ENCODE measurements at regions of chr20 and their contacts with region 1.

Region 1: GRCh38 chr20:17536944-17537444 is 5.8 kb upstream of the BFSP1 start:
- DNase-seq: peak; percentile 76
- ATAC-seq: peak; percentile 98
- H3K4me3 ChIP-seq: no peak overlapping the region
- H3K27ac ChIP-seq: no peak overlapping the region
- H3K4me1 ChIP-seq: peaks cover 2% of the 10 kb centered on the region
- H3K27me3 ChIP-seq: peaks cover 4% of the 10 kb centered on the region
- CTCF ChIP-seq: peak; percentile 98
- POLR2A ChIP-seq: peak; percentile 46; the same call in 1 of the 2 replicates
- RAD21 ChIP-seq: peak; percentile 94

Region 2: DNA sequence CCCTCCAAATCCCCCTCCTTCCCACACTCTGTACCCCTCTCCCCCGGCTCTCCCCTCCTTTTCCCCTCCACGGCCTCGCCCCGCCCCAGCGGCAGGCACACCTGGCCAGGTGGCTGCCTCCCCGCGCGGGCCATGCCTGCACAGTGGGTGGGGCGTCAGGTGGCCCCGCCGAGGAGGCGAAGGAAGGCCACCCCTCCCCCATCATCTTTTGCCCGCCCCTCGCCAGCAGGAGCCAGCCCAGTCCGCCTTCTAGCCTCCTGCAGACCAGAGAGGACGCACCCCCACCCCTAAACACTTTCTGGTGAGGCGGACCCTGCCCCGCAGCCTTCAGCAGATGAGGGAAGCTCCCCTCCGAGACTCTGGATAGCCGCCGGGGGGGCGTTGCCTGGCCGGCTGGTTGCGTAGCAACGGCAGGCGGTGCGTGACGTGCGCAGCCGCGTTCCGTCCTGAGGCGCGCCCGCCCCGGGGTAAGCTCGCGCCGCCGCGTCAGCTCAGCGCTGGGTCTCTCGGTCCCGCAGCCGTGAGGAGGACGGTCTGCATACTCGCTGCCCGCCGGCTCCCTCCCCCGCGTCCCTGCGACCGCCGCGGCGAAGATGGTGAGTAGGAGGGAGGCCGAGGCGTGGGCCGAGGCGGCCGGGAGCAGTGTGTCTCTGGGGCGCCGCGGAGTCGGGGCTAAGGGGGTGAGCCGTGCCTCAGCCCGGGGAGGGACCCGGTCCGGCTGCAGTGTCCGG is 32.8 kb after region 1 on chr20 and contains the start of gene DSTN:
- CTCF ChIA-PET with region 1: interaction called, 7 read pairs
- POLR2A ChIA-PET with region 1: interaction called, 4 read pairs
- dilution Hi-C with region 1: no loop called
- in situ Hi-C with region 1: loop called (anchors 5 kb)
- intact Hi-C with region 1: loop called (anchors 1 kb)
- DNase-seq: peak; percentile 95
- ATAC-seq: peak; percentile 78
- H3K4me3 ChIP-seq: peak within 1 kb of the TSS; percentile 85
- H3K27ac ChIP-seq: peak within 1 kb of the TSS; percentile 98
- H3K4me1 ChIP-seq: peaks cover 9% of the 10 kb centered on the region
- H3K27me3 ChIP-seq: no peaks in the 10 kb centered on the region
- CTCF ChIP-seq: no peak
- POLR2A ChIP-seq: peak; percentile 96
- RAD21 ChIP-seq: no peak
- total RNA-seq, gene DSTN: 221 and 383 TPM in 2 replicates

Region 3: GRCh38 chr20:17611540-17612286 is 74.7 kb after region 1 on chr20:
- CTCF ChIA-PET with region 1: interaction called, 4 read pairs
- POLR2A ChIA-PET with region 1: no interaction called
- dilution Hi-C with region 1: no loop called
- in situ Hi-C with region 1: loop called (anchors 5 kb)
- intact Hi-C with region 1: loop called (anchors 2 kb)
- DNase-seq: no peak
- ATAC-seq: peak; percentile 8
- H3K4me3 ChIP-seq: no peak overlapping the region
- H3K27ac ChIP-seq: peak overlapping the region; percentile 21
- H3K4me1 ChIP-seq: no peaks in the 10 kb centered on the region; the same call in 1 of the 2 replicates
- H3K27me3 ChIP-seq: no peaks in the 10 kb centered on the region
- CTCF ChIP-seq: peak; percentile 45
- POLR2A ChIP-seq: no peak
- RAD21 ChIP-seq: peak; percentile 27

Region 4: DNA sequence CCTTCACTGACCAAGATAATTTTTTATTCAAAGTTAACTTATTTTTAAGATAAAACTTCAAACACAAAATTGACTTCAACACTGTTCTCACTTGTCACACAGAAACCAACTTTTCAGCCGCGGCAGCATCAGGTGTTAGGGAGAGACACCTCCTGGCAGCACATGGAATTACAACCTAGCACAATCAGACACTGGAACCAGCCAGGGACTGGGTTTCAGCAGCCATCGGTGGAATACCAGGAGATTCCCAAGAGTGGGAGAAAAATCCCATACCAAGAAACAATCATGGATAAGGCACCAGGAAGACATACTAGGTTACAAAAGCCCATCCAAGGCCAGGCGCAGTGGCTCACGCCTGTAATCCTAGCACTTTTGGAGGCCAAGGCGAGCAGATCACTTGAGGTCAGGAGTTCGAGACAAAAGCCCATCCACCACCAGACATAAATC is 361.6 kb after region 1 on chr20:
- CTCF ChIA-PET with region 1: no interaction called
- POLR2A ChIA-PET with region 1: no interaction called
- dilution Hi-C with region 1: no loop called
- in situ Hi-C with region 1: no loop called
- intact Hi-C with region 1: loop called (anchors 1 kb)
- DNase-seq: peak; percentile 75
- ATAC-seq: peak; percentile 70
- H3K4me3 ChIP-seq: no peak overlapping the region
- H3K27ac ChIP-seq: no peak overlapping the region
- H3K4me1 ChIP-seq: peaks cover 13% of the 10 kb centered on the region
- H3K27me3 ChIP-seq: no peaks in the 10 kb centered on the region
- CTCF ChIP-seq: peak; percentile 95
- POLR2A ChIP-seq: 0 out of 2 replicates have a peak, but pooled peaks have one; percentile 34
- RAD21 ChIP-seq: peak; percentile 99

Region 5: DNA sequence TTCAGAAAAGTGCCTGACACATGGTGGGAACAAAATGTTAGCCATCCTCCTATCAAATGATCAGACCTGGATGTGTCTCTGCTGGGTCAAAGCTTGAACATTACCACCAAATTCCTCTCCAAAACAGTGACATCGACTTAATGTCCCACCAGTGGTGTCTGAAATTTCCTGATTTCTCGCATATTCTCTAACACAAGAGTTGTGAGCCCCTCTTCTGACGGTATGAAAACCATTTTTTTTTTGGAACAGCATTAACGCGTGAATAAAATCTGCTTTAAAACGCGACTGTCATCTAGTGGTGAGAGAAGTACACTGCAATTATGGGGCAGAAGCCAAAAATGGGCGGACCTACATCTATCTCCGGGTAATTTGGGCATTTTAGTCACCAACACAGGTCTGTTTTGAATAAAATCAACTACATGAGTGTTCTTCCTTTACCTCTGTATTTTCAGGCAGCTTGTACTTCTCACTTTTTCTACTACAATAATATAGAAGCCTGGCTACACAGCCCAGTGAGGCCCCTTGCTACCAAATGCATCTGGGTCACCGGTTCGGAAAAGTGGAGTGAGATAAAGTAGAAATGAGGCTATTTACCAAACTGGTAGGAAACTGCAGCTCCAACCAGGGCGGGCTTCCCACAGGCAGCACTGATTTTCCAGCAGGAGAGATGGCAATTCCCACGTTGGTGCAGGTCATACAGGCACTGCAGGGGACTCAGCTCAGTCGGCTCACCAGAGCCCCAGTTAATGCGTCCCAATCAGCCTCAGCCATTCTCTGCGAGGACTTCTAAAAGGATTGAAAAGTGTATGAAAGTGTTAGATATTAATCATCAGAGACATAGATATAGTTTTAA is 459.2 kb after region 1 on chr20:
- CTCF ChIA-PET with region 1: no interaction called
- POLR2A ChIA-PET with region 1: no interaction called
- dilution Hi-C with region 1: no loop called
- in situ Hi-C with region 1: no loop called
- intact Hi-C with region 1: loop called (anchors 5 kb)
- DNase-seq: peak; percentile 74
- ATAC-seq: peak; percentile 91
- H3K4me3 ChIP-seq: no peak overlapping the region
- H3K27ac ChIP-seq: no peak overlapping the region
- H3K4me1 ChIP-seq: no peaks in the 10 kb centered on the region
- H3K27me3 ChIP-seq: peaks cover 4% of the 10 kb centered on the region; the same call in 1 of the 2 replicates
- CTCF ChIP-seq: peak; percentile 99
- POLR2A ChIP-seq: 0 out of 2 replicates have a peak, but pooled peaks have one; percentile 27
- RAD21 ChIP-seq: peak; percentile 94

Measured in IMR-90 (cell line).